ENCODE measurements at regions of chr10 and their contacts with region 1.

Region 1: DNA sequence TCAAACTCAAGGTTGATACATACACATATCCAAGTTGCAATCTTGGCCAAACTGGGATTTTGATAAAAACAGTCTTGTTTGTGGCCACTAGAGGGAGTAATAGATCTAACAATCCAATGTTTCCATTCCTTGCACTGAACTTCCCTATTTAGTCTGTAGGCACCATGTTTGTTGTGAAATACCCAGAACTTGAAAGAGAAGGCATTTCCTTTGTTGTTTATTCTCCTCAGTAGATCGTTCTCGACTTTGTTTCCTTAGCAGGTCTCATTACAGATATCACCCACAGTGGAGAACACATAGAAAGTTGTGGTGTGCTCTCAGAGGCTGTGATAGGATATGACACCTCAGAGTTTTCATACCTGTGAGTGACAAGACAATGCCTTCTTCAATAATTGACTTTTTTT is 70.3 kb upstream of the MXI1 start:
- DNase-seq: no peak
- H3K4me3 ChIP-seq: no peak overlapping the region
- H3K27ac ChIP-seq: no peak overlapping the region
- H3K4me1 ChIP-seq: 0 out of 7 replicates have a peak, but pooled peaks cover 0 to 2% (median 0%) of the 10 kb centered on the region in 4 experiments
- H3K27me3 ChIP-seq: no peaks in the 10 kb centered on the region
- CTCF ChIP-seq: peak in 2 of 3 experiments; percentile 71 to 88; a peak in 2 of 4 replicates
- EP300 ChIP-seq: no peak
- POLR2A ChIP-seq: no peak
- RAD21 ChIP-seq: peak; percentile 86 to 87

Region 2: DNA sequence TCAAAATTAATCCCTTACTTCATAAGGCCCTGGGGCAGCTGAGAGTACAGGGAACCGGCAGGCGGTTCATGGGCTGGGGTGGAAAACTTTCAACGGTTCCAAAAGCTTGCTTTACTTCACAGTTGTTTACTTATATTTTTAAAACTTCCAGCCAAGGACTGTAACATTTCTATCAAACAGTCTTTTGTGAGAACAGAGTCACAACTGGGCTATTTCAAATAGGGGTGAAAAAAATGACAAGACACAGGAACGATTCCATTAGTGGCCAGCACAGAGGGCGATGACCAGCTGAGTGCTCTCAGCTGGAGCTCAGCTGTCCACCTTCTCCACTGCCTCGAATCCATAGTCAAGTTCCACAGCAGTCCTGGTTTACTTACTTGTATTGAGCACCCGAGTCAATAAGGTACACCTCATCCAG is 262.0 kb before region 1 on chr10:
- CTCF ChIA-PET with region 1: no interaction called
- POLR2A ChIA-PET with region 1: no interaction called
- DNase-seq: no peak
- H3K4me3 ChIP-seq: no peak overlapping the region
- H3K27ac ChIP-seq: no peak overlapping the region
- H3K4me1 ChIP-seq: no peaks in the 10 kb centered on the region
- H3K27me3 ChIP-seq: no peaks in the 10 kb centered on the region
- CTCF ChIP-seq: no peak
- EP300 ChIP-seq: no peak
- POLR2A ChIP-seq: no peak
- RAD21 ChIP-seq: no peak

Region 3: DNA sequence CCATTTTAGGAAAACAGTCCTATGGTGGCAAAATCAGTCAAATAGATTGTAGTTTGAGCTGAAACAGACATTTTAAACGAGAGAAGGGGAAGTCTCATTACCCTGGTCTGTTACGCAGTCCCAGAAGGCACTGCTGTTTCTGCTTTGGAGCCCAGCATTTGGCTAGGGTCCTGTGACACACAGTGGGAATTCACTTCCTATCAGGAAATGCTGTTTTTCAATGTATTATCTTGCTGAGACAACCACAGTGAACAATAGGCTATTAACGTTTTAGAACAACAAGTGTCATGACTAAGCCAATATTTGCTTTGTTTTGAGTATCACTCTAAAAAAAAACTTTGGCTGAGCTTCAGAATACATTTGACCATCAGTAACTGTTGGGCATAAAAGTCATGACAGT is 55.2 kb before region 1 on chr10:
- CTCF ChIA-PET with region 1: no interaction called
- POLR2A ChIA-PET with region 1: no interaction called
- DNase-seq: no peak
- H3K4me3 ChIP-seq: no peak overlapping the region
- H3K27ac ChIP-seq: no peak overlapping the region
- H3K4me1 ChIP-seq: peaks cover 0 to 7% (median 5%) of the 10 kb centered on the region in 4 experiments; a peak in 4 of 7 replicates
- H3K27me3 ChIP-seq: no peaks in the 10 kb centered on the region; a peak in 1 of 7 replicates
- CTCF ChIP-seq: no peak
- EP300 ChIP-seq: no peak
- POLR2A ChIP-seq: no peak
- RAD21 ChIP-seq: no peak

Region 4: DNA sequence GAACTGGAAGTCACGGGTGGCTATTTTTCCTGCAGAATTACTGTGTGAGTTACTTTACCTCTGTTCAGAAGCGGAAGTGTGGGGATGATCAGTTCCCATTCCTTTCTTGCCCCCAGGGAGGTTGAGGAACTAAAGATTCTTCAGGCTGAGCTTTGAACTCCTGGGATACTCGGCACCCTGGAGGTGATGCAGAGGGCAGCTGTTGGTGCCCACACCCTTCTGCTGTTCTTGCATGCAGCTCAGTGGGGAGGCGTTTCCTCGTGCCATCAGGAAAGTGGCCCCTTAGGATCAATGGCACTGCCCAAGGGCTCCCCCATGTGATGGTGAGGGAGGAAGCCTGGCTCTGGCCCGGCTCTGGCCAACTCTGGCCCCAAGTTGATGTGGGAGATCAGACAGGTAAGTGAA is 25.6 kb after region 1 on chr10:
- CTCF ChIA-PET with region 1: interaction called, 39 read pairs
- POLR2A ChIA-PET with region 1: no interaction called
- DNase-seq: peak in 1 of 2 experiments; percentile 69
- H3K4me3 ChIP-seq: no peak overlapping the region
- H3K27ac ChIP-seq: no peak overlapping the region
- H3K4me1 ChIP-seq: peaks cover 2 to 8% (median 5%) of the 10 kb centered on the region in 4 experiments
- H3K27me3 ChIP-seq: peaks cover 31 to 71% (median 51%) of the 10 kb centered on the region in 4 experiments
- CTCF ChIP-seq: peak; percentile 20 to 37 (median 33)
- EP300 ChIP-seq: no peak
- POLR2A ChIP-seq: no peak
- RAD21 ChIP-seq: peak; percentile 44 to 60; a peak in 3 of 4 replicates

Region 5: DNA sequence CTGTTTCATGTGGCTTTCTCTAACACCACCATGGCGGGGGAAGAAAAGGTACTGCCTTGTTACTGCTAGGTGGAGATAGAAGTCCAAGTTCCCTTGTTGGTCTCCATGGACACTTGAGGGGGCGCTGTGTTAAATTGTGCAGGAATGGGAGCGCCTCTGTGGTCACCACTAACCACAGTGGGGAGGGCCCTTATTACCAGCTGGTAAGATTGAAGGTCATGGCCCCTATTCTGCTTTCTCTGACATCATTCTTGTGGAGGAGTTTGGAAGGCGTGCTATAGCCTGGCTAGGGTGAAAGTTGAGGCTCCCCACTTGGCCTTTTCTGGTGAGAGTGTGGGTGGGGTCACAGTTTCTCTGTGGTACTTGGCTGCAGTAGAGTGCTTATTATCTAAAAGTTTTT is 55.4 kb after region 1 on chr10:
- CTCF ChIA-PET with region 1: interaction called, 17 read pairs
- POLR2A ChIA-PET with region 1: no interaction called
- DNase-seq: peak in 1 of 2 experiments; percentile 52
- H3K4me3 ChIP-seq: no peak overlapping the region
- H3K27ac ChIP-seq: no peak overlapping the region
- H3K4me1 ChIP-seq: no peaks in the 10 kb centered on the region
- H3K27me3 ChIP-seq: peaks cover 0 to 4% (median 2%) of the 10 kb centered on the region in 4 experiments; a peak in 2 of 7 replicates
- CTCF ChIP-seq: peak; percentile 38 to 75 (median 63)
- EP300 ChIP-seq: no peak
- POLR2A ChIP-seq: no peak
- RAD21 ChIP-seq: peak in 1 of 2 experiments; percentile 45; a peak in 2 of 4 replicates

Region 6: DNA sequence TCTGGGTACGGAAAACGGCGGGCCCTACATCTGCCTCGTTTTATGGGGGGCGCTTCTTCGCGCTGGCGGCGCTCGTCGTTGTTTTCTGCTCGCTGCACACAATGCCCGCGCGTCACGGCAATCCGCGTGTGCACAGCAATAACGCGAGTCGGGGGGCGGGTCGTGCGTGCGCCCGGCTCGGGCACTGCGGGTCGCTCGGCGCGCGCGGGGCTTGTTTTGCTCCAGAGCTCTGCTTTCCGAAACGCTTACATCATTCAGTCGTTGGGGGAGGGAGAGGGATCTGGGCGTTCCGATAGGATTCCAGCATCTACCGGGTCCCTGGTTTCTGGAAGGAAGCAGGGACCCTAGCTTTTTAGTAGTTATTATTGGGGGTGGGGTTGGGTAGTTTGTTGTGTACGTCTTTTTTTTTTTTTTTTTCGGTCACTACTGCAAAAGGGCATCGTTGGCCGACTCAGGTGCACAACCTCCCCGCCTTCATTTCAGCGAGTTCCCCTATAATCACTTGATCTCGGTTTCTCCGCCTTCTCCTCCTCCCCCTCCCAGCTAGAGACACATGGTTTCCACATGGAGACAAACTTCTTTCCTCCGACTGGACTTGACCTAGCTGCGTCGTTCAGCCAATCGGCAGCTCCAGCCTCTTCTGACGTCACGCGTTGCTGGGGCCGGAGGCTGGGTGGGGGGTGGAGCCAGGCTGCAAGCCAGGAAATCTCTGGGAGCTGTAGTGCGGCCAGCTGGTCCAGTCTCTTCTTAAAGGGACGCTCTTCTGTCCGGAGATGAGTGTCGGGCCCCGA is 73.7 kb after region 1 on chr10:
- CTCF ChIA-PET with region 1: interaction called, 44 read pairs
- POLR2A ChIA-PET with region 1: interaction called, 5 read pairs
- DNase-seq: peak; percentile 93 to 97
- H3K4me3 ChIP-seq: peak overlapping the region; percentile 73 to 80 (median 78)
- H3K27ac ChIP-seq: peak overlapping the region; percentile 2; the same call in 1 of the 2 replicates
- H3K4me1 ChIP-seq: peaks cover 1 to 20% (median 14%) of the 10 kb centered on the region in 4 experiments; a peak in 6 of 7 replicates
- H3K27me3 ChIP-seq: peaks cover 18 to 67% (median 49%) of the 10 kb centered on the region in 4 experiments
- CTCF ChIP-seq: no peak
- EP300 ChIP-seq: 0 out of 3 replicates have a peak, but pooled peaks of 1 of the 2 experiments have one; percentile 30
- POLR2A ChIP-seq: peak; percentile 47 to 59
- RAD21 ChIP-seq: no peak

Region 7: DNA sequence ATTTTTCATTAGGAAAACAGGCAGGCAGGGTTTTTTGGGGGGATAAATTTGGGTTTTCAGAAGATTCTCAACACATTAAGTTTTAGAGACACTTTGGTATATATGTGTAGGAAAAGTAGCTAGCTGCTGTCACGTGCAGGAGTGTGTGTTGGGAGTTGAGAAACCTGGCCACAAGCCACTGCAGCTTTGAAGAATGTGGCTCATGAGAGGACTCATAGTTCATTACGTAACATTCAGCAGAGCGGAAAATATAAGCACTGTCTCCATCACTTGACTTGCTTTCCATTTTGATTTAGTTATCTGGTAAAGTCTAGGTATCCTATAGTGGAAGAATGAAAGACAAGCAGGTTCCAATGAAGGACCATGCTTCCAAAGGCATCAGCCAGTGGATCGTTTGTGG is 136.3 kb after region 1 on chr10:
- CTCF ChIA-PET with region 1: interaction called, 34 read pairs
- POLR2A ChIA-PET with region 1: no interaction called
- DNase-seq: no peak
- H3K4me3 ChIP-seq: no peak overlapping the region
- H3K27ac ChIP-seq: no peak overlapping the region
- H3K4me1 ChIP-seq: no peaks in the 10 kb centered on the region
- H3K27me3 ChIP-seq: no peaks in the 10 kb centered on the region
- CTCF ChIP-seq: no peak
- EP300 ChIP-seq: no peak
- POLR2A ChIP-seq: no peak
- RAD21 ChIP-seq: no peak

Region 8: GRCh38 chr10:110285501-110285900 is 148.4 kb after region 1 on chr10:
- CTCF ChIA-PET with region 1: interaction called, 34 read pairs
- POLR2A ChIA-PET with region 1: no interaction called
- DNase-seq: no peak
- H3K4me3 ChIP-seq: no peak overlapping the region
- H3K27ac ChIP-seq: no peak overlapping the region
- H3K4me1 ChIP-seq: peaks cover 0 to 3% (median 2%) of the 10 kb centered on the region in 4 experiments; a peak in 3 of 7 replicates
- H3K27me3 ChIP-seq: no peaks in the 10 kb centered on the region
- CTCF ChIP-seq: no peak
- EP300 ChIP-seq: no peak
- POLR2A ChIP-seq: no peak
- RAD21 ChIP-seq: no peak